ENCODE measurements at regions of chr3 and their contacts with region 1.

Region 1: GRCh38 chr3:185942907-185943759 is 5.3 kb upstream of the TRA2B start:
- DNase-seq: peak; percentile 92
- H3K4me3 Mint-ChIP-seq: peak overlapping the region; percentile 6
- H3K27ac Mint-ChIP-seq: peak overlapping the region; percentile 38
- H3K4me1 Mint-ChIP-seq: peaks cover 23% of the 10 kb centered on the region
- H3K27me3 Mint-ChIP-seq: peaks cover 18% of the 10 kb centered on the region

Region 2: GRCh38 chr3:185929192-185930151 is 13.7 kb before region 1 on chr3:
- CTCF ChIA-PET with region 1: interaction called, 28 read pairs
- DNase-seq: no peak
- H3K4me3 Mint-ChIP-seq: peak overlapping the region; percentile 99
- H3K27ac Mint-ChIP-seq: peak overlapping the region; percentile 80
- H3K4me1 Mint-ChIP-seq: peaks cover 95% of the 10 kb centered on the region
- H3K27me3 Mint-ChIP-seq: no peaks in the 10 kb centered on the region

Region 3: DNA sequence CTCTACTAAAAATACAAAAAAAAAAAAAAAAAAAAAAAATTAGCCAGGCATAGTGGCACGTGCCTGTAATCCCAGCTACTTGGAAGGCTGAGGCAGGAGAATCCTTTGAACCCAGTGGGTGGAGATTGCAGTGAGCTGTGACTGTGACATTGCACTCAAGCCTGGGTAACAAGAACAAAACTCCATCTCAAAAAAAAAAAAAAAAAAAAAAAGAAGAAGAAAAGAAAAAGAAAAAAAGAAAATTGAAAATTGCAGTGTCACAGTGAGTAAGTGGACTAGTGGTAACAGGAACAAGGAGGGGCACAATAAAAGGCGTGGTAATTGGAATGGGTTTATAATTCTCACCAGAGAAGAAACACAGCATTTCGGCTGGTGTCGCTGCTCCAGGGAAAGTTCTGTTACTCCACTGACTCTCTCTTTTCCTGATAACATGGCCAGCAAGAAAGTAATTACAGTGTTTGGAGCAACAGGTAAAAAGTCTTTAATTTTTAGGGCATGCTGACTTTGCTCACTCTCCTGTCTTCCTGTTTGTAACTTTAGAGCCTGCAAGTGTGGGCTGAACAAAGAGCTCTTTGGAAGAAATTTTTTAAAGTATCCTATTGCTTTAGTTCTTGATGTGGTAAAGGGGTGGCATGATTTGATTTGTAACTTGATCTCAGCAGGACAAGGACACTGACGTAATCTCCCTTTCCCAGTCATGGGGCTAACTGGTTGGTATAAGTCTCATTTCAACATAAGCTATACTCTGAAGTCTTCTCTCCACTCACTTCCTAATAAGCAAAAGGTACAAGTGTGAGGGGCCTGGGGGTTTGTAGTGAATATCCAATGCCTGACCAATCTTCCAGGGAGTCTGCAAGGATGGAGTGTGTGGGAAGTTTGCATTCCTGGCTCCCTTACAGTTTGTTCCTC is 16.7 kb after region 1 on chr3:
- CTCF ChIA-PET with region 1: interaction called, 80 read pairs
- DNase-seq: no peak
- H3K4me3 Mint-ChIP-seq: peak overlapping the region; percentile 1
- H3K27ac Mint-ChIP-seq: no peak overlapping the region
- H3K4me1 Mint-ChIP-seq: peaks cover 2% of the 10 kb centered on the region
- H3K27me3 Mint-ChIP-seq: peaks cover 8% of the 10 kb centered on the region

Region 4: DNA sequence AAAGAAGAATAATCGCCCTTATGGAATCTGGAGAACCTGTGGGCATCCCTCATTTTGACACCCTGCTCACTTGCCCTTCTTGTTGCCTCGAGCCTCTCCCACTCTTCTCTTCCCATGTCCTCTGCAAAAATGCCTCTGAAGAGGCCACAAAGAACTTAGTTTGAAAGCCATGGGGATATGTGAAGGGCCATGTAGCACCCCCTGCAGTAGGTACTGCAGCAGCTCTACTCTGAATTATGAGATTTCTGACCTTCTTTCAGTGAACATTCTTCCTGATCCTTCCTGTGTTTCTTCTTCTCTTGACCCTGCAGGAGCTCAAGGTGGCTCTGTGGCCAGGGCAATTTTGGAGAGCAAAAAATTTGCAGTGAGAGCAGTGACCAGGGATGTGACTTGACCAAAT is 25.0 kb after region 1 on chr3:
- CTCF ChIA-PET with region 1: interaction called, 28 read pairs
- DNase-seq: no peak
- H3K4me3 Mint-ChIP-seq: no peak overlapping the region
- H3K27ac Mint-ChIP-seq: no peak overlapping the region
- H3K4me1 Mint-ChIP-seq: no peaks in the 10 kb centered on the region
- H3K27me3 Mint-ChIP-seq: no peaks in the 10 kb centered on the region

Region 5: DNA sequence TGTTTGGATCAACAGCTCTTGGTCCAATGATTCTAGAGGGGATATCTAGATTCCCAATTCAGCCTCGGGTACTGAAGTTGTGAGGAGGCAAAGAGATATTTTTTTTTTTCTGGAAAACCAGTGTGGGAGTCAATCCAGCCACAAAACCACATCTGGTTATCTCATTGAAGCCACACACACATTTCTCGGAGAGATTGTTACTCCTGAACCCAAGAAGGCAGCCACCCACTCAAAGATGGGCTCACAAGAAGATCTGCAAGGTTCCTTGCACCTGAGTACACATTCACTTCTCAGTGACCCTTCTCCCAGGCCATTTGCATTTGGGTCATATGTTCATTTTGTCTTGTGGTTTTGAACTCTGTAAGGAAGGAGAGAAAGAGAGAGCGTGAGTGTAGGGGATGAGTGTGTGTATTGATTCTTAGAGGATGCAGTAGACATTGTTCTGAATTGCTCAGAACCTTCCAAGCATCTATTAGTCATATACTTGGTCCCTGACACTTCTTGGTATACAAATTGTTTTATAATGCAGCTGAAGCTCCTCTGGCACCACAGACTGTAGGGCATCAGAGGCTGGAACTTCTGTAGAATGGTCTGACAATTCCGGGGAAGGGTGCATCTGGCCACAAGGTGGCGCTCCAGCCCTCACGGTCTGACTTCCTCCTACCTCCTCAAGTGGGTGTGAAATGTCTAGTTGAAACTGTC is 34.0 kb after region 1 on chr3:
- CTCF ChIA-PET with region 1: interaction called, 45 read pairs
- DNase-seq: peak; percentile 88
- H3K4me3 Mint-ChIP-seq: no peak overlapping the region
- H3K27ac Mint-ChIP-seq: no peak overlapping the region
- H3K4me1 Mint-ChIP-seq: peaks cover 9% of the 10 kb centered on the region
- H3K27me3 Mint-ChIP-seq: peaks cover 4% of the 10 kb centered on the region

Region 6: GRCh38 chr3:185983495-185984141 is 40.5 kb after region 1 on chr3:
- CTCF ChIA-PET with region 1: interaction called, 45 read pairs
- DNase-seq: peak; percentile 65
- H3K4me3 Mint-ChIP-seq: no peak overlapping the region
- H3K27ac Mint-ChIP-seq: no peak overlapping the region
- H3K4me1 Mint-ChIP-seq: no peaks in the 10 kb centered on the region
- H3K27me3 Mint-ChIP-seq: peaks cover 29% of the 10 kb centered on the region

Region 7: GRCh38 chr3:186241910-186242821 is 299.0 kb after region 1 on chr3:
- CTCF ChIA-PET with region 1: interaction called, 13 read pairs
- DNase-seq: peak; percentile 76
- H3K4me3 Mint-ChIP-seq: no peak overlapping the region
- H3K27ac Mint-ChIP-seq: no peak overlapping the region
- H3K4me1 Mint-ChIP-seq: peaks cover 20% of the 10 kb centered on the region
- H3K27me3 Mint-ChIP-seq: peaks cover 25% of the 10 kb centered on the region

Measured in activated naive CD4-positive, alpha-beta T cell treated with anti-CD3 and anti-CD28 coated beads, Interleukin-2, amount 10 ng/mL, durations not matched to agents 7 days and 5 days (primary cell).